CD4-positive, alpha-beta memory T cell (primary cell): ENCODE measurements at regions of chr16 and their contacts with region 1.

Region 1: GRCh38 chr16:78235168-78235800 is 135.8 kb downstream of the WWOX start:
- DNase-seq: peak in 4 of 5 donors; percentile 41 to 55 (median 48)
- H3K4me3 ChIP-seq: no peak overlapping the region
- H3K4me3 Mint-ChIP-seq: no peak overlapping the region
- H3K27ac ChIP-seq: no peak overlapping the region
- H3K27ac Mint-ChIP-seq: peak overlapping the region in 2 of 7 donors; percentile 8 to 37
- H3K4me1 ChIP-seq: no peaks in the 10 kb centered on the region
- H3K4me1 Mint-ChIP-seq: peaks cover 0 to 3% (median under 1%) of the 10 kb centered on the region in 4 donors
- H3K27me3 ChIP-seq: no peaks in the 10 kb centered on the region
- H3K27me3 Mint-ChIP-seq: no peaks in the 10 kb centered on the region

Region 2: GRCh38 chr16:78060293-78060692 is 175.0 kb before region 1 on chr16:
- CTCF ChIA-PET with region 1: no interaction called
- POLR2A ChIA-PET with region 1: no interaction called
- intact Hi-C with region 1: no loop called
- DNase-seq: no peak
- H3K4me3 ChIP-seq: no peak overlapping the region
- H3K4me3 Mint-ChIP-seq: no peak overlapping the region
- H3K27ac ChIP-seq: no peak overlapping the region
- H3K27ac Mint-ChIP-seq: no peak overlapping the region
- H3K4me1 ChIP-seq: no peaks in the 10 kb centered on the region
- H3K4me1 Mint-ChIP-seq: peaks cover 0 to 3% (median 0%) of the 10 kb centered on the region in 4 donors
- H3K27me3 ChIP-seq: no peaks in the 10 kb centered on the region
- H3K27me3 Mint-ChIP-seq: peaks cover 7 to 18% of the 10 kb centered on the region in 2 donors

Region 3: DNA sequence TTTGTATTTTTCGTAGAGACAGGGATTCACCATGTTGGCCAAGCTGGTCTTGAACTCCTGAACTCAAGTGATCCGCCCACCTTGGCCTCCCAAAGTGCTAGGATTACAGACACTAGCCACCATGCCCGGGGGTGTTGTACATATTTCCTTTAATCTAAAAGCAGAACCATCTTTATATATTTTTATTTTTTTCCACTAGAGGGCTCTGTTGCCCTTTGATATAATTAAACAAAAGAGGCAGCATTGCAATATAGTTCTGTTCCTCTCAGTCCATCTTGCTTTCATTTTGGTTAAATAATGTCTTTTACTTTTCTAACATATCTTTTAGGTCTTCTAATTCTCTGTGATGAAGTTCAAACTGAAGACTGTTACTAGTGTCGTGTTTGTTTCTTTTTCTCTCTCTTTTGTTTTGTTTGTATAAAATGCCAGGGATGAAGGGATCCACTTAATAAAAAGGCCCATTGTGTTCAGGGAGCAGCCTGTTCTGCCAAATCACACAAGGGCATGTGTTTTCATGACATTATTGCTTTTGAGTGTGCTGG is 112.4 kb before region 1 on chr16:
- CTCF ChIA-PET with region 1: interaction called, 6 read pairs
- POLR2A ChIA-PET with region 1: no interaction called
- intact Hi-C with region 1: loop called (anchors 1 kb)
- DNase-seq: peak in 4 of 5 donors; percentile 54 to 63 (median 58)
- H3K4me3 ChIP-seq: no peak overlapping the region
- H3K4me3 Mint-ChIP-seq: peak overlapping the region in 3 of 8 donors; percentile 32 to 53 (median 49)
- H3K27ac ChIP-seq: no peak overlapping the region
- H3K27ac Mint-ChIP-seq: peak overlapping the region in 5 of 7 donors; percentile 14 to 73 (median 62)
- H3K4me1 ChIP-seq: no peaks in the 10 kb centered on the region
- H3K4me1 Mint-ChIP-seq: peaks cover 2 to 11% (median 4%) of the 10 kb centered on the region in 4 donors
- H3K27me3 ChIP-seq: no peaks in the 10 kb centered on the region
- H3K27me3 Mint-ChIP-seq: no peaks in the 10 kb centered on the region

Region 4: GRCh38 chr16:78292903-78293347 is 57.6 kb after region 1 on chr16:
- CTCF ChIA-PET with region 1: no interaction called
- POLR2A ChIA-PET with region 1: no interaction called
- intact Hi-C with region 1: no loop called
- DNase-seq: no peak
- H3K4me3 ChIP-seq: no peak overlapping the region
- H3K4me3 Mint-ChIP-seq: no peak overlapping the region
- H3K27ac ChIP-seq: no peak overlapping the region
- H3K27ac Mint-ChIP-seq: no peak overlapping the region
- H3K4me1 ChIP-seq: no peaks in the 10 kb centered on the region
- H3K4me1 Mint-ChIP-seq: no peaks in the 10 kb centered on the region
- H3K27me3 ChIP-seq: no peaks in the 10 kb centered on the region
- H3K27me3 Mint-ChIP-seq: no peaks in the 10 kb centered on the region